Breast epithelium (tissue), 4 donors: ENCODE measurements at regions of chr1 and their contacts with region 1.

Region 1: DNA sequence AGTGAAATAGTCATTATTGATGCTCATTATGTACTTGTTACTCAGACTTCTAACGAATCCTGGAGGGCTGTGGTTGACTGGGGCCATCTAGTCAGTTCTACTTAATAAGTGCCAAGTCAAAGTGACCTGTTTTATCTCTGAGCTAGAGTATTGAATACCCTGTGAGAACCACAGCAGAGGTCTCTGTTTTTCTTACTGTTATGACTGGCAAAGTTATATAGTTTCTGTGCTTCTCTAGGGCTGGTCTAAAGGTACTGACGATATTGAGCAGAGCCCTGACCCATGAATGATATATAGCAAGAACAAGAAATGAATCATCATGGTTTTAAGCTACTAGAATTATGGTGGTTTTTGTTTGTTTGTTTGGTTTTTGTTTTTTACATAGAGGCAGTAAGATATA is 555.8 kb downstream of the PLA2G4A start:
- DNase-seq: no peak
- H3K4me3 ChIP-seq: no peak overlapping the region
- H3K27ac ChIP-seq: no peak overlapping the region
- H3K4me1 ChIP-seq: no peaks in the 10 kb centered on the region
- H3K27me3 ChIP-seq: no peaks in the 10 kb centered on the region
- CTCF ChIP-seq: no peak
- POLR2A ChIP-seq: no peak

Region 2: DNA sequence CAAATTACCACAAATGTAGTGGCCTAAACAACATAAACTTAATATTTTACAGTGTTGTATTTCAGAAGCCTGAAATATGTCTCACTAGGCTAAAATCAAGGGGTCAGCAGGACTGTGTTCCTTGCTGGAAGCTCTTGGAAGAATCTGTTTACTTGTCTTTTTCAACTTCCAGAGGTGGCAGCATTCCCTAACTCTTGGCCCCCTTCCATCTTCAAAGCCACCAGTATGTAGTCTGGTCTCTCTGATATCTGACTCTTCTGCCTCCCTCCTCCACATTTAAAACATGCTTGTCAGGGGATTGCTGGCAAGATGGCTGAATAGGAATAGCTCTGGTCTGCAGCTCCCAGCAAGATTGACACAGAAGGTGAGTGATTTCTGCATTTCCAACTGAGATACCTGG is 11.7 kb after region 1 on chr1:
- intact Hi-C with region 1: loop called (anchors 2 kb)
- DNase-seq: no peak
- H3K4me3 ChIP-seq: no peak overlapping the region
- H3K27ac ChIP-seq: no peak overlapping the region
- H3K4me1 ChIP-seq: no peaks in the 10 kb centered on the region
- H3K27me3 ChIP-seq: no peaks in the 10 kb centered on the region
- CTCF ChIP-seq: no peak
- POLR2A ChIP-seq: no peak